Activated CD8-positive, alpha-beta T cell treated with anti-CD3 and anti-CD28 coated beads, Interleukin-2, amount 10 ng/mL, durations not matched to agents 7 days and 5 days (primary cell): ENCODE measurements at regions of chr10 and their contacts with region 1.

Region 1: GRCh38 chr10:5692461-5693358 is 8.1 kb downstream of the TASOR2 start:
- DNase-seq: peak; percentile 70
- ATAC-seq: peak; percentile 89
- H3K4me3 Mint-ChIP-seq: peak overlapping the region; percentile 74
- H3K27ac Mint-ChIP-seq: peak overlapping the region; percentile 71
- H3K4me1 Mint-ChIP-seq: peaks cover 54% of the 10 kb centered on the region
- H3K27me3 Mint-ChIP-seq: no peaks in the 10 kb centered on the region

Region 2: GRCh38 chr10:5404208-5405041 is 288.3 kb before region 1 on chr10 and contains the start of gene TUBAL3:
- CTCF ChIA-PET with region 1: no interaction called
- POLR2A ChIA-PET with region 1: no interaction called
- DNase-seq: no peak
- ATAC-seq: no peak
- H3K4me3 Mint-ChIP-seq: no peak within 1 kb of the TSS
- H3K27ac Mint-ChIP-seq: no peak within 1 kb of the TSS
- H3K4me1 Mint-ChIP-seq: no peaks in the 10 kb centered on the region
- H3K27me3 Mint-ChIP-seq: peaks cover 30% of the 10 kb centered on the region
- total RNA-seq, gene TUBAL3: not detected

Region 3: GRCh38 chr10:5525561-5526341 is 167.0 kb before region 1 on chr10:
- CTCF ChIA-PET with region 1: no interaction called
- POLR2A ChIA-PET with region 1: no interaction called
- DNase-seq: no peak
- ATAC-seq: no peak
- H3K4me3 Mint-ChIP-seq: no peak overlapping the region
- H3K27ac Mint-ChIP-seq: no peak overlapping the region
- H3K4me1 Mint-ChIP-seq: no peaks in the 10 kb centered on the region
- H3K27me3 Mint-ChIP-seq: peaks cover under 1% of the 10 kb centered on the region

Region 4: GRCh38 chr10:5614155-5614721 is 78.5 kb before region 1 on chr10:
- CTCF ChIA-PET with region 1: no interaction called
- POLR2A ChIA-PET with region 1: no interaction called
- DNase-seq: no peak
- ATAC-seq: no peak
- H3K4me3 Mint-ChIP-seq: no peak overlapping the region
- H3K27ac Mint-ChIP-seq: no peak overlapping the region
- H3K4me1 Mint-ChIP-seq: no peaks in the 10 kb centered on the region
- H3K27me3 Mint-ChIP-seq: peaks cover 3% of the 10 kb centered on the region

Region 5: GRCh38 chr10:5708356-5708755 is 15.6 kb after region 1 on chr10:
- CTCF ChIA-PET with region 1: interaction called, 9 read pairs
- POLR2A ChIA-PET with region 1: interaction called, 12 read pairs
- DNase-seq: no peak
- ATAC-seq: no peak
- H3K4me3 Mint-ChIP-seq: no peak overlapping the region
- H3K27ac Mint-ChIP-seq: no peak overlapping the region
- H3K4me1 Mint-ChIP-seq: peaks cover 50% of the 10 kb centered on the region
- H3K27me3 Mint-ChIP-seq: no peaks in the 10 kb centered on the region